ENCODE measurements at regions of chr14 and their contacts with region 1.

Region 1: GRCh38 chr14:71789005-71789404 is 143.2 kb upstream of the RGS6 start:
- DNase-seq: no peak

Region 2: DNA sequence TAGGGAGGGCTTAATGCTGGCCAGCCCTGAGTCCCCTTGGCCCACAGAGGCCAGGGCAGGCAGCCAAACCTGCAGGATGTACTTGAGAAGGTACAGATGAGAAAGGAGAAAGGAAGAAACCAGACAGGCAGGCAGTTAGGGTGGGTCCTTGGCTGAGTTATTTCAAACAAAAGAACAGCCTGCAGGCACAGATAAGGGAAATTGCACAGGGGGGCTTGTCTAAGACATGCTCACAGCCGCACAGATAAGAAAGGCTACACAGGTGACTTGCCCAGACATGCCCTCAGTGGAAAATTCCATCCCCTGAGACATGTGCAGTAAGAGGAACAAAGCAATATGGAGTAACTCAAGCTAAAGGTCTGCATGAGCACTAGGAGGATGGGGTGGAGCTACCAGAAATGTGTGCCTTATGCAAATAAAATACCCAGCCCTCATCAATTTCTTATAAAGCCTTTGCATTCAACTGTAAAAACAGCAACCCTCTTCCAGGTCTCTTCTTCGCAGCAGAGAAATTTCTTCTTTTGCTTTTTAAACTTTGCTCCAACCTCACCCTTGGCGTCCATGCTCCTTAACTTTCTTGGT is 15.0 kb before region 1 on chr14:
- intact Hi-C with region 1: no loop called
- DNase-seq: peak; percentile 11

Region 3: DNA sequence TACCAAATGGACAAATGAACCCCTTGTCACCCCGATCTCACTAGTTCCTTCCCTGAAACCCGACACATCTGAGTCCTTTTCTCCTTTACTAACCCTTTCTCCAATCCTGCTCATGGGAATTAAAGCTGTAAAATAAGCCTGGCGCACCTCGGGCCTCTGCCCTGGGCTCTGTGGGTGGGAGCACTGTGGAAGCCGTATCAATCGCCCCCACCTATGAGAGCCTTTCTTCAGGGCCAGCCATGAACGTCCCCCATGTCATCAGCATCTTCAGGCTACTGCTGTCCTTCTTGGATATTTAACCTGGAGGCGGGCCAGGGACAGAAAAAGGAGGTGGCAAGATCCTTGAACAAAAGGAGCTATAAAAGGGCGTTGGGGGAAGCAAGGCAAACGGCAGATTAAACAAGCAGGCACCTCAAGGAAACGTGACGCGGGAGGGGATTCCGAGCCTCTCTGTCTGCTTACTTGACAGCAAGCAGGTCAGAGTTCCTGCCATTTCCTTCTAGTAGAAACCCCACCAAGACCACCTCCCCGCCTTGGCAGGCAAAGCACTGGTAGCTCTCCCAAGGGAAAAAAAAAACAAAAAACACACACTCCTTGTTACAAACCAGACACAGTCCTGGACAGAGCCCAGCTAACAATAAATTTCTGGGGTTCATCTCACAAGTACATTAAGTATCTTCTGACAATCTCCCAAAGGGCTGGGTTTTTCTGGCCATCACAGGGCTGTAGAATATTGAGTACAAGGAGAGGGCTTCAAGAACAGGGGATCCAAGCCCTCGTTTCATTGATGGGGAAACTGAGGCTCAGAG is 1042.0 kb after region 1 on chr14:
- intact Hi-C with region 1: loop called in 1 of 2 experiments (anchors 5 kb)
- DNase-seq: no peak

Measured in posterior vena cava (tissue), 2 donors.